ENCODE measurements at regions of chr6 and their contacts with region 1.

Region 1: GRCh38 chr6:30678964-30679726 is 6.3 kb upstream of the DHX16 start:
- DNase-seq: peak; percentile 67
- H3K4me3 ChIP-seq: peak overlapping the region in 2 of 3 experiments; percentile 22 to 27
- H3K27ac ChIP-seq: no peak overlapping the region
- H3K4me1 ChIP-seq: peaks cover 36% of the 10 kb centered on the region
- H3K27me3 ChIP-seq: no peaks in the 10 kb centered on the region
- CTCF ChIP-seq: peak; percentile 85 to 98

Region 2: GRCh38 chr6:30730601-30731435 is 51.7 kb after region 1 on chr6:
- CTCF ChIA-PET with region 1: interaction called, 10 read pairs
- dilution Hi-C with region 1: no loop called
- in situ Hi-C with region 1: no loop called
- intact Hi-C with region 1: no loop called
- DNase-seq: peak; percentile 88
- H3K4me3 ChIP-seq: no peak overlapping the region
- H3K27ac ChIP-seq: no peak overlapping the region
- H3K4me1 ChIP-seq: peaks cover 5% of the 10 kb centered on the region
- H3K27me3 ChIP-seq: no peaks in the 10 kb centered on the region
- CTCF ChIP-seq: peak; percentile 81 to 95

Region 3: DNA sequence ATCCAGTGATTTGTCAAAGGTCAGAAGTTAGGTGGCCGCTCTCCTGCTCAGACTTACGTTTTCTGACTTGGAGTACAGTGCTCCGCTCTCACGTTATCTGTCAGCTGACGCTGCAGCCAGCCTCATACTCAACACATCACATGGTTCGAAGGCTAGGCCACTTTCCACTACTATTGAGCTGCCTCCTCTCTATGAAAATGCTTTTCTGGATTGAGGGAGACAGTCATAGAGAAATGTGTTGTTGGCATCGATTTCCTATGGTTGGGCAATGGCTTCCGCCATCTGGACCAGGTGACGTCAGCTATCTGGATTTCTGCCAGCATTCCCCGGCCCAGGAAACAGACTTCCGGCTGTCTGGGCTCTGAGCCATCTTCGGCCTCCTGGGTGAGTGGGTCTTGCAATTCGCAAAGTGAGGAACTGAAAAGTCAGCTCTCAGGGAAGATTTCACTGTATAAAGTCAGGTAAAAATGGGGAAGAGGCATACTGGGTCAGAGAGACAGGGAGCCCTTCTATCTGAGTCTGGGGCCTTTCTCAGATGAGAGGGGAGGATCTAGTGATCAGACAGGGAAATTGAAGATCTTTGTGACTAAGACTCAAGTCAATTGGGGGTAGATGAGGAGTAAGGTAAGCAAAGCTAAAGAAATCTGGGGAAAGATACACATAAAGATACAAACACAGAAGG is 102.7 kb after region 1 on chr6:
- CTCF ChIA-PET with region 1: no interaction called
- dilution Hi-C with region 1: loop called (anchors 5 kb)
- in situ Hi-C with region 1: no loop called
- intact Hi-C with region 1: no loop called
- DNase-seq: peak; percentile 97
- H3K4me3 ChIP-seq: no peak overlapping the region
- H3K27ac ChIP-seq: peak overlapping the region; percentile 97
- H3K4me1 ChIP-seq: peaks cover 36% of the 10 kb centered on the region
- H3K27me3 ChIP-seq: no peaks in the 10 kb centered on the region
- CTCF ChIP-seq: no peak

Region 4: DNA sequence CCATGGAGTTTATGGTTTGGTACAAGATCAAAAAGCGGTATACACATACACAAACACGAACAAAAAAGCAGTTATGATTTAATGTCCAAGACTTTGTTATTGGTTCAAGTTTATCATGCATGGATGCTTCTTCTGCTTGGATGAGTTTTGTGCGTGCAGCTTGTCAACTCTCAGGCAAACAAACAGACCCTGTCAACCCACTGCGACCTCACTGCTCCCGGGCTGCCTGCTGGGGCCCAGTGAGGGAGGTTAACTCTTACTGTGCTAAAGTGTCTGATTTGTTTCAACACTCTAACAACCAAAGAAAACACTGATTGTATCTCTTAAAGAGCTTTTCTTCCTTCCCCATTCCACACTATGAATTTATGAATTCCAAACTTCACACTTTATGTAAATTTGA is 178.4 kb after region 1 on chr6:
- CTCF ChIA-PET with region 1: no interaction called
- dilution Hi-C with region 1: no loop called
- in situ Hi-C with region 1: no loop called
- intact Hi-C with region 1: no loop called
- DNase-seq: no peak
- H3K4me3 ChIP-seq: no peak overlapping the region
- H3K27ac ChIP-seq: no peak overlapping the region
- H3K4me1 ChIP-seq: no peaks in the 10 kb centered on the region
- H3K27me3 ChIP-seq: no peaks in the 10 kb centered on the region
- CTCF ChIP-seq: no peak

Region 5: DNA sequence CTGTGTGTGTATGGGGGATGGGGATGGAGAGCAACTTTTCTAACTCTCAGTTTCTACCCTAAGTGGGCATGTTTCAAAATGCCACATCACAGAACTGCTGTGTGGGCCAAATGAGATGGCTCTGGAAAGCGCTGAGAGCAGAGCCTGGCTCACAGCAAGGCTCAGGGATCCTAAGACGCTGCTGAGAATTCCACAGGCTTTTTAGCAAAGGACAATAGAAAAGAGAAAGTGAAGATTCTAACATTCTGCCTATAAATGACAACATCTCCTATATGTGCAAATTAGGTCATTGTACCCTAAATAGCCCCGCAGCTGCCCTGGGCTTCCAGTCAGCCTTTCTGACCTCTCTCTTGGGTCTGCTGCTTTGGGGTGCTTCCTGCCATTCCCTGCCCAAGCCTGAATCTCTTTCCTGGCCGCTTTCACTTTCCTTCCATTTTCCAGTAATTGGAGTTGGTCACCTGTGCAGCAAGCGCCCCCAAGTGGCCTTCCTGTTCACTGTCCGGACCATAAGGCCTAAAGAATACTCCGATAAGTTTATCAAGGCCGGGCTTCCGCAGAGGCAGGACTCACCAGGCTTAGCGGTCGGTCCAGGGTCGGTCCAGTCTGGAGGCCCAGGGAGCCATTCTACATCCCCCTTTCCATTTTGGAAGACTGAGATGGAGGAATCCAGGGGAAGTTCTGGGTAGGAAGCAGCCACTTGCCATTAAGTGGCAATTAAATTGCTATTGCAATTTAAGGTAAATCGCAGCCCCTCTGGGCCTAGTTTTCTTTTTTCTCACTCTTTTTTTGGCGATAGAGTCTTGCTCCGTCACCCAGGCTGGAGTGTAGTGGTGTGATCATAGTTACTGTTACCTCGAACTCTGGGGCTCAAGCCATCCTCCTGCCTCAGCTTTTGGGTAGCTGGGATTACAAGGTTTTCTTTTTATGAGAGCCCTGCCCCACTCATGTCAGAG is 198.6 kb after region 1 on chr6:
- CTCF ChIA-PET with region 1: no interaction called
- dilution Hi-C with region 1: no loop called
- in situ Hi-C with region 1: no loop called
- intact Hi-C with region 1: loop called (anchors 1 kb)
- DNase-seq: peak; percentile 80
- H3K4me3 ChIP-seq: peak overlapping the region in 2 of 3 experiments; percentile 13 to 20
- H3K27ac ChIP-seq: peak overlapping the region; percentile 63
- H3K4me1 ChIP-seq: peaks cover 37% of the 10 kb centered on the region
- H3K27me3 ChIP-seq: no peaks in the 10 kb centered on the region
- CTCF ChIP-seq: peak; percentile 92 to 96